ENCODE measurements at regions of chr5 and their contacts with region 1.

Region 1: DNA sequence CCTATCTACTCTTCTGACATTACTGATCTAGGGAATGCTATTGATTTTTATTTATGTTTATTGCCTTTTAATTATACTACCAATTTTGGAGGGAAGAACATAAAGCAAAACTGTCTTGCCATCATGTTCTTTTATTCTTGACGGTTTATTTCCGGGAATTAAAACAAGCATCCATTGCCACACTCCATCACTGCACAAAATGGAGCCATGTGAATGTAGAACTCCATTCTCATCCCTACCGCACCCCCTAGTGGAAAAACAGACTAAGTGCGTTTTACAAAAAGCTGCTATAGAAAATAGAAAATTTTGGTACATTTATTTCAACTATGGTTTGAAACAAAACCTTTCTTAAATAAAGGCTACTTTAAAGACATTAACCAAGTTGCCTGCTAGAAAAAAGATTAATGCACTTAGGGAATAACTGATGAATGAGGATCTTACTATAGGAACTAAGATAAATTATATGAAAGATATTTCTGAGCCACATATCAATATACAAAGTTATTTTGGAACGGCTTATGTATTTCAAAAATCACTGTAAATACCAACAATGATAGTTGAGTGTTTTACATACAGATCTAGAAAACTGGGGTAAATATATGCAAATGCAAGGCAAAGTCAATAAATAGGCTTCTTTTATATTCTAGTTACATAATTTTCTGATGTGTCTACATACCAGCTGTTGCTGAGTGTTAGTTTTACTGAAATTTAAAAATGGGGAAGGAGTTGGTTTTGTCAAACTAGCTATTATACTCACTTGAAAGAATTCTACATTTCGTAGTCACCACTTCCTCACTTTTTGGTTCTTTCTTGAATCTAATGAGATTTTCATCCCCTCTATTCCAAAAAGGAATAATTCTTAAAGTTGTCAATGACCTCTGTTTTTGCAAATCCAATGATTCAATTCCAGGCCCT is 26.5 kb downstream of the OXCT1 start:
- DNase-seq: no peak
- H3K4me3 ChIP-seq: no peak overlapping the region
- H3K27ac ChIP-seq: no peak overlapping the region
- H3K4me1 ChIP-seq: peaks cover 0 to 5% (median 0%) of the 10 kb centered on the region in 4 donors
- H3K27me3 ChIP-seq: no peaks in the 10 kb centered on the region
- CTCF ChIP-seq: peak; percentile 31 to 73 (median 70)
- EP300 ChIP-seq: no peak
- POLR2A ChIP-seq: no peak

Region 2: GRCh38 chr5:40904205-40904993 is 939.3 kb before region 1 on chr5:
- intact Hi-C with region 1: loop called (anchors 10 kb)
- DNase-seq: peak; percentile 75
- H3K4me3 ChIP-seq: no peak overlapping the region
- H3K27ac ChIP-seq: peak overlapping the region in 1 of 4 donors; percentile 40
- H3K4me1 ChIP-seq: peaks cover 0 to 5% (median 2%) of the 10 kb centered on the region in 4 donors
- H3K27me3 ChIP-seq: no peaks in the 10 kb centered on the region
- CTCF ChIP-seq: peak; percentile 30 to 83 (median 69)
- EP300 ChIP-seq: no peak
- POLR2A ChIP-seq: no peak

Region 3: GRCh38 chr5:41009232-41009631 is 834.5 kb before region 1 on chr5:
- intact Hi-C with region 1: no loop called
- DNase-seq: no peak
- H3K4me3 ChIP-seq: no peak overlapping the region
- H3K27ac ChIP-seq: no peak overlapping the region
- H3K4me1 ChIP-seq: no peaks in the 10 kb centered on the region
- H3K27me3 ChIP-seq: no peaks in the 10 kb centered on the region
- CTCF ChIP-seq: no peak
- EP300 ChIP-seq: no peak
- POLR2A ChIP-seq: no peak

Region 4: DNA sequence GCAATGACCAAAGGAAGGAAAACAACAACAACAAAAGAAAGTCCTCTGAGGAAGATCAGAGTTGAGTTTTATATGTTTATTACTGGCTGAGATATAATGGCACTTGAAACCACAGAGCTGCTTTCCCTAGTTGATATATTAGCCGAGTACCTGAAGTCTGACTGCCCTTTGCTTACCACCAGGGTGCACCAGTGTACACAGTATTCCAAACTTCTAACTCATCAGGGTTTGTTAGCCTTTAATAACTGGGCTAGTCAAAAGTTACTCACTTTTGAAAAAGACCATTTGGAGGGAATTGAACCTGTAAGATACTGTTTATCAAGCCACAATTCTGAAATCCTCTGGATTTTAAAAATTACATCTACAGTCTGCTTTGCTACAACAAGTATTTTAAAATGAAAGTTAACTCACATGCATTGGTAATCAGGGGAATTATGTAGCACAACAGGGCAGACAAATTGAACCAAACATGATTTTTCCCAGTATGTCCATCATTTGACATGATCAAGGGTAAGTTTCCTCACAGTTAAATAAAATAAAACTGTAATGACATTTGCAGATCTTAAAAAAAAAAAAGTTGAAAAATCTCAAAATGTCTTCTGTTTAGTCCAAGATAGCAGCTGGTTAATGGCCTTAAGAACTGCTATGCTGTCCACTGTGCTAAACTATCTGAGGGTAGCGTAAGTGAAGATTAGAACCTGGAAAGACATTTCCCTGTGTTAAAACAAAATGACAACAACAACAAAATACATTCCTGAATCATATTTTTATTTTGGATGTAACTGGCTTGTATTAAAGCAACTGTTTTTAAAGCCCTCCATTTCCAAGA is 573.1 kb before region 1 on chr5:
- intact Hi-C with region 1: loop called (anchors 2 kb)
- DNase-seq: peak; percentile 71
- H3K4me3 ChIP-seq: no peak overlapping the region
- H3K27ac ChIP-seq: no peak overlapping the region
- H3K4me1 ChIP-seq: no peaks in the 10 kb centered on the region
- H3K27me3 ChIP-seq: no peaks in the 10 kb centered on the region
- CTCF ChIP-seq: peak in 3 of 4 experiments; percentile 46 to 66 (median 49)
- EP300 ChIP-seq: no peak
- POLR2A ChIP-seq: no peak

Region 5: DNA sequence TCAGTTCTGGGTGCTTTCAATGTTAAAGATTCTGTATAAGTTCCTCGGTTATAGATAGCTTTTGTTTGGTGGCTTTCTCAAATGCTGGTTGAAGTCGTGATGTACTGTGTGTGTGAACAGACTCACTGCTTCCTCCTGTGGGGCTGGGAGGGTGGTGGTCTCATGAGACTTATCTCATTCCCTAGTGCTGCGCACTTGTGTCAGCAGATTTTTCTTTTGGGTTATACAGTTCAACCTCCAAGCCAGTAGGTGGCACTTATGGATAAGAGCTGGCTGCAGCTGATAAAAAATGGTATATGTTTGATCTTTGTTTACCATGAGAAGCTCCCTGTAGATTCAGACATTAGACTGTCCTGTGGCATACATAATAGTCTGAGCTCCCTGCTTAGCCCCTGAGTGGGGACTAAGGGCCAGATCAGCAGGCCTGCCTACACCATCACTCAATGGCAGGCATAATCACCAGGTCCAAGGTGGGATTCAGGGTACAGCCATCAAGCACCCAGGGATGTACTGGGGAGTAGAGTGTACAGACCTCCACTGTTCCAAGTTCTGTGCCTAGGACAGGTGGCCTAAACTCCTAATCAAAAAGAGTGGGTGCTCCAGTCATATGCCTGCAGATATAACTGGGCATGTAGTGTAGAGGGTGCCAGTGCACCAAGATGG is 147.7 kb before region 1 on chr5:
- intact Hi-C with region 1: loop called (anchors 10 kb)
- DNase-seq: no peak
- H3K4me3 ChIP-seq: no peak overlapping the region
- H3K27ac ChIP-seq: no peak overlapping the region
- H3K4me1 ChIP-seq: no peaks in the 10 kb centered on the region
- H3K27me3 ChIP-seq: no peaks in the 10 kb centered on the region
- CTCF ChIP-seq: peak in 1 of 4 experiments; percentile 18
- EP300 ChIP-seq: no peak
- POLR2A ChIP-seq: no peak

Region 6: DNA sequence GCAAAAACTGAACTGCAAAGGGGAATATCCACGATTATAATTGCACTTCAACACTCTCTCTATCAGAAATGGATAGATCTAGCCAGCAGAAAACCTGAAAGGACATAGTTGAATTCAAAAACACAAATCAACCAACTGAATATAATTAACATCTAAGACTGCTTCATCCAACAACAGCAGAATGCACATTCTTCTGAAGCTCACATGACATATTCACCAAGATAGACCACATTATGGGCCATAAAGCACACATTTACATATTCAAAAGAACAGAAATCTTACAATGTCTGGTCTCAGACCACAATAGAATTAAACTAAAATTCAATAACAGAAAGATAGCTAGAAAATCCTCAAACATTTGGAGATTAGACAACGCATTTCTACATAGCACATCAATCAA is 199.7 kb after region 1 on chr5:
- intact Hi-C with region 1: no loop called
- DNase-seq: no peak
- H3K4me3 ChIP-seq: no peak overlapping the region
- H3K27ac ChIP-seq: no peak overlapping the region
- H3K4me1 ChIP-seq: no peaks in the 10 kb centered on the region
- H3K27me3 ChIP-seq: no peaks in the 10 kb centered on the region
- CTCF ChIP-seq: no peak
- EP300 ChIP-seq: no peak
- POLR2A ChIP-seq: no peak

Region 7: DNA sequence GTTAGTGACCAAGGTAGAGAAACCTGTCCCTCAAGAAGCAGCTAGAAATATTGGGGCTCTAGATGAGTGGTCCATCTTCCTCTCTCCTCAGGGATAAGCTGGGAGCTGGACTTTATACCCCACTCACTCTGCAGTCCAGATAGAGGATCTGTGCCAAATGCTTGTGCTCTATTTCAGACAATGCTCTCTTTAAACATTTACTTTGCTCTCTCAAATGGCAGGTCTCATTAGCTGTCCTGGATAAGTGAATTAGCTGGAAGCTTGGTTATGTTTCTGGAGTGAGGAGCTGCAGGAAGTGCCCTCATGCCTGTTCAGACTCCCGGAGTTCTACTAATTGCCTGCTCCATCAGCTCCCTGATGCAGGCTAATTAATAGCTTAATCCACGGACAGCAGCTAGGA is 761.8 kb after region 1 on chr5:
- intact Hi-C with region 1: no loop called
- DNase-seq: no peak
- H3K4me3 ChIP-seq: no peak overlapping the region
- H3K27ac ChIP-seq: no peak overlapping the region
- H3K4me1 ChIP-seq: peaks cover 0 to 6% (median 0%) of the 10 kb centered on the region in 4 donors
- H3K27me3 ChIP-seq: no peaks in the 10 kb centered on the region
- CTCF ChIP-seq: no peak
- EP300 ChIP-seq: no peak
- POLR2A ChIP-seq: no peak